ENCODE measurements at regions of chr15 and their contacts with region 1.

Region 1: GRCh38 chr15:99076552-99077308 is 28.1 kb upstream of the SYNM start:
- DNase-seq: peak; percentile 58
- ATAC-seq: peak; percentile 87
- H3K4me3 Mint-ChIP-seq: peak overlapping the region; percentile 65
- H3K27ac Mint-ChIP-seq: peak overlapping the region; percentile 89
- H3K4me1 Mint-ChIP-seq: peaks cover 6% of the 10 kb centered on the region
- H3K27me3 Mint-ChIP-seq: peaks cover 10% of the 10 kb centered on the region

Region 2: DNA sequence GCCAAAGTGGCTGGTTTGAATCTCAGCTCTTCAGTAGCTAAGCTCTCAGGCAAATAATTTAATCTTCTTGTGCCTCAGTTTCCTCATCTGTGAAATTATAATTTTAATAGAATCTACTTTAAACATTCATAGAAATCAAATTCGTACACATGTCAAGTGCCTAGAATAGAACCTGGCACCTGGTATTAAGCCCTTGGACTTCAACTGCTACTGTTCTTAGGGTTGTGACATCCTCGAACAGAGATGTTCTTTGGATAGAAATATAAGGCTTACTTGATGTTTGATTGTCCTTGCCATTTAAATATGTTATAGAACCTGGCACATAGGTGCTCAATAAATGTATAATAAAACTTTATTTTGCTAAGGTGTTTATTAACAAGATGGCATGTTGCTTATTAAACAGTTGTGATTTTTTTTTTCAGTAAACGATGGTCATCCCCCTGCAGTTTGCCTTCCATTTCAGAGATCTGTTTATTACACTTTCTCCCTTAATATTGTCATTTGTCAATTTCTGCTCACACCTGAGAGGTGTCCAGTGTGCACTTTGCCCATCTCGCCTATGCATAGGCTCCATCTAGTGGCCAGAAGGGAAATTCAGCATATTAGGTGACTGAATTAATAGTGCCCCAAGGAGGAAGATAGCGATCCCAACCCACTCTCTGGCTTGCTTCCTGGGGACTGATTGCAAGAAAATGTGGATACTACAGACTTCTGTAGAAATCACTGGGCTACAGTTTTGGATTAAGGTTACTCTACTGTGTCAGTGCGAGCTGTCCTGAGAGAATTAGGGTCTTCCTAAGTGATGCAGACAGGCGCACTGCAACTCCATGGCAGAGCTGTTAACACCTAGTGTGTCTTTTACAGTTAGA is 417.7 kb before region 1 on chr15:
- CTCF ChIA-PET with region 1: interaction called, 3 read pairs
- POLR2A ChIA-PET with region 1: no interaction called
- intact Hi-C with region 1: loop called in 1 of 2 experiments (anchors 10 kb)
- DNase-seq: peak; percentile 40
- ATAC-seq: peak; percentile 81
- H3K4me3 Mint-ChIP-seq: no peak overlapping the region
- H3K27ac Mint-ChIP-seq: no peak overlapping the region
- H3K4me1 Mint-ChIP-seq: peaks cover 41% of the 10 kb centered on the region
- H3K27me3 Mint-ChIP-seq: no peaks in the 10 kb centered on the region

Region 3: DNA sequence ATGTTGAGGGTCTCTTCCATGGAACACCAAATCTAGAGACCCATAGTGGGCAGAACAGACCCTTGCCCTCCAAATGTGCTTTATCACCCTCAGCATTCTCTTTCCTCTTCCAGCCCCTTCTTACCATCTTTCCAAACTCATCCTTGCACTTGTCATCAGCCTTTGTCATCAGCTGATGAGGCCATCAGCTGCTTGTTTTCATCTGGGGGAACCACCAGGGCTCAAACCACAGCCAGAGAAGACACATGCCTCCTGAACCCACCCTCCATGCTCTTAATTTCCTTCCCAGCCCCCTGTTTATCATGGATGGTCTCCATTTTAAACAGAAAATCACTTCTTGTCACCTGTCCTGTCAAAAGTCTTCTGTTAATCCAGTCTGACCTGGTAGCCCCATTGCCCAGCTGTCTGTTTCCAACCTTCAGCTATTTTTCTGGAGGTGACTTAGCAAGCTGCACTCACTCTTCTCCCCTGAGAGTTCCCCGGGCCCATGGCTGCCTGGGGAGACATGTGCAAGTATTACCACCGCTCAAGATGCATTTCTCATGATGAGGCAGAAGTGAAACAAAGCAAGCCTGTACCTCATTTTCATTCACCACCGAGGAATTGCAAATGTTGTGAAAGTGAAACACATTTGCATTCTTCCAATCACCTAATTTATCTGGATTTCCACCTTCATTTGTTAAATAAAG is 13.4 kb after region 1 on chr15:
- CTCF ChIA-PET with region 1: interaction called, 10 read pairs
- POLR2A ChIA-PET with region 1: no interaction called
- intact Hi-C with region 1: no loop called
- DNase-seq: peak; percentile 17
- ATAC-seq: peak; percentile 44
- H3K4me3 Mint-ChIP-seq: no peak overlapping the region
- H3K27ac Mint-ChIP-seq: no peak overlapping the region
- H3K4me1 Mint-ChIP-seq: peaks cover 5% of the 10 kb centered on the region
- H3K27me3 Mint-ChIP-seq: no peaks in the 10 kb centered on the region

Region 4: GRCh38 chr15:99155961-99156450 is 79.3 kb after region 1 on chr15:
- CTCF ChIA-PET with region 1: no interaction called
- POLR2A ChIA-PET with region 1: no interaction called
- intact Hi-C with region 1: no loop called
- DNase-seq: no peak
- ATAC-seq: peak; percentile 33
- H3K4me3 Mint-ChIP-seq: no peak overlapping the region
- H3K27ac Mint-ChIP-seq: no peak overlapping the region
- H3K4me1 Mint-ChIP-seq: no peaks in the 10 kb centered on the region
- H3K27me3 Mint-ChIP-seq: no peaks in the 10 kb centered on the region

Measured in activated CD4-positive, alpha-beta T cell treated with anti-CD3 and anti-CD28 coated beads for 36 hours (primary cell).